ENCODE measurements at regions of chr16 and their contacts with region 1.

Region 1: DNA sequence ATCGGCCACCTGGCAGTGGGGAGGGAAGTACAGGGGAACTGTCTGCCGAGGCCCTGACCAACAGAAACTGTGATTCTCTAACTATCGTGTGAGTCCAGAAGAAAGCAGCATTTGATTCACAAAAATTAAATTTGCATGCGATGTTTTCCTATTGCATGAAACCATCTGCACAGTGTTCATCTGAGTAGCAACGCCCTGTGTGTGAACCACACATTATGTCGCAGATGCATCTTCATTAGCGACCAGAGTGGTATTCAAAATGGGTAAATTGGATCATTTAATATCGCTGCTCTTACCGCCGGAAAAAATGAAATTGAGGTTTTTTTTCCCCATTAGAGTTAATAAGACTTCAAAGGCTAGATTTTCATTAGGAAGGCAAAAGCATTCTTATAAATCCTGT is 260.6 kb downstream of the ABCC12 start:
- DNase-seq: no peak
- ATAC-seq: no peak
- H3K4me3 ChIP-seq: no peak overlapping the region
- H3K27ac ChIP-seq: no peak overlapping the region
- H3K4me1 ChIP-seq: no peaks in the 10 kb centered on the region
- H3K27me3 ChIP-seq: no peaks in the 10 kb centered on the region

Region 2: GRCh38 chr16:47949714-47950113 is 54.6 kb after region 1 on chr16:
- intact Hi-C with region 1: loop called in 1 of 4 experiments (anchors 10 kb)
- DNase-seq: no peak
- ATAC-seq: no peak
- H3K4me3 ChIP-seq: no peak overlapping the region
- H3K27ac ChIP-seq: no peak overlapping the region
- H3K4me1 ChIP-seq: no peaks in the 10 kb centered on the region
- H3K27me3 ChIP-seq: no peaks in the 10 kb centered on the region

Measured in right cardiac atrium (tissue), 5 donors.